Naive thymus-derived CD8-positive, alpha-beta T cell (primary cell): ENCODE measurements at regions of chr1 and their contacts with region 1.

Region 1: GRCh38 chr1:160726498-160727315 is 12.3 kb upstream of the SLAMF7 start:
- DNase-seq: peak; percentile 21 to 82 (median 66)
- ATAC-seq: peak; percentile 82 to 94
- H3K4me3 Mint-ChIP-seq: no peak overlapping the region
- H3K27ac Mint-ChIP-seq: no peak overlapping the region
- H3K4me1 Mint-ChIP-seq: peaks cover 10 to 25% (median 20%) of the 10 kb centered on the region in 4 donors
- H3K27me3 Mint-ChIP-seq: no peaks in the 10 kb centered on the region

Region 2: GRCh38 chr1:160768295-160768657 is 41.6 kb after region 1 on chr1:
- POLR2A ChIA-PET with region 1: interaction called, 11 read pairs
- DNase-seq: peak; percentile 67 to 92 (median 83)
- ATAC-seq: peak; percentile 99
- H3K4me3 Mint-ChIP-seq: peak overlapping the region; percentile 66 to 91 (median 82)
- H3K27ac Mint-ChIP-seq: peak overlapping the region; percentile 90 to 97 (median 96)
- H3K4me1 Mint-ChIP-seq: peaks cover 16 to 23% (median 21%) of the 10 kb centered on the region in 4 donors
- H3K27me3 Mint-ChIP-seq: no peaks in the 10 kb centered on the region